Transverse colon (tissue), 4 donors: ENCODE measurements at regions of chr18 and their contacts with region 1.

Region 1: DNA sequence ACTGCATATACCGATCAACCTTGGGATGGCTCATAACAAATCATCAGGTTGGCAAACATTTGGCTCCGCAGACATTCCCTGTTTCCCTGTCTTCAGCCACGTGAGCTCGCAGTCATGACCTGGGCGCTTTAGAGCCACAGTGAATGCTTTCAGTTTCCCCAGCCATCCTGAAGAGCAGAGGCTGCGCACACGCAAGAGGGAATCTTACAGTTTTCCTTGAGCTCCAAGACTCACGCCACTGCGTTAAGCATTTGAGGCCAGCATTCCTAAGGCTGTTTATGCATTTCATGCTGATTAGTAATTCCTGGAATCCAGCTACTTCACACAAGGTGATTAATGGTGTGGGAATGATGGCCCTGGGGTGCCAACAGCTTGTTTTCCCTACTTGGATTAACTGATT is 95.1 kb downstream of the MTCL1 start:
- DNase-seq: no peak
- H3K4me3 ChIP-seq: no peak overlapping the region
- H3K27ac ChIP-seq: peak overlapping the region; percentile 59 to 88 (median 81)
- H3K4me1 ChIP-seq: peaks cover 11 to 34% (median 21%) of the 10 kb centered on the region in 4 donors
- H3K27me3 ChIP-seq: no peaks in the 10 kb centered on the region
- CTCF ChIP-seq: no peak
- EP300 ChIP-seq: no peak
- POLR2A ChIP-seq: no peak

Region 2: DNA sequence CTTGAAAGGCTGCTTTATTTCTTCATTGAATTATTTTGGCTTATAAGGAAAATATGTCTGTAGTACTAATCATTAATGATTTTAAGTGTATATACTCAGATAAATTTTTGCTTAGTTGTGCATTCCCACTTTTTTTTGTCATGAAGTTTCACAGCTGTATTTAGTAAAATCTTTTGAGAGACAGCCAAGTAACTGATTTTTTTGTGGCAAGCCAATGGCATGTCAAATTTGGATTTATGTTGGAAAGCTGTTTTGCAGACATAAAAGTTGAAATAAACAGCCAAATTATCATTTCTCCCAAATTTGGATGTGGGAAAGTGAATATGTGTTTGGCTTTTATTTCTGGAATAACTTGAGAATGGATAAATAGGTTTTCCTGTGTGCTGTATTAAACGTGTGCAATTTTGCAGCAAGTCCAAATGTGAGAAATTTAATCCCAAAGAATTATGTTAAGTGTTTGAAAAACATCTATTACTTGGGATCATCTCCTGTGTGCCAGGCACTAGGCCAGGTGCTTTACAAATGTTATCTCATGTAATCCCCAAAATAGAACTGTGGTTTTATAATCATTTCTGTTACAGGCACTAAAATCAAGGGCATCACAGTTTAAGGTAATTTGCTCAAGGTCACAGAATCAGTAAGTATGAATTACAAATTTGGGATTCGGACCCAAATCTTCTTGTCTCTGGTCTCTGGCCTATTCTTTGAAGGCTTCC is 1072.9 kb before region 1 on chr18:
- in situ Hi-C with region 1: no loop called
- intact Hi-C with region 1: loop called (anchors 10 kb)
- DNase-seq: no peak
- H3K4me3 ChIP-seq: no peak overlapping the region
- H3K27ac ChIP-seq: no peak overlapping the region
- H3K4me1 ChIP-seq: peaks cover 0 to 3% (median 0%) of the 10 kb centered on the region in 4 donors
- H3K27me3 ChIP-seq: no peaks in the 10 kb centered on the region
- CTCF ChIP-seq: no peak
- EP300 ChIP-seq: no peak
- POLR2A ChIP-seq: no peak